ENCODE measurements at regions of chr20 and their contacts with region 1.

Region 1: GRCh38 chr20:5100684-5101347 is 18.9 kb downstream of the PCNA start:
- DNase-seq: peak; percentile 77
- H3K4me3 Mint-ChIP-seq: no peak overlapping the region
- H3K27ac Mint-ChIP-seq: peak overlapping the region; percentile 49
- H3K4me1 Mint-ChIP-seq: no peaks in the 10 kb centered on the region
- H3K27me3 Mint-ChIP-seq: no peaks in the 10 kb centered on the region
- CTCF ChIP-seq: peak; percentile 77

Region 2: DNA sequence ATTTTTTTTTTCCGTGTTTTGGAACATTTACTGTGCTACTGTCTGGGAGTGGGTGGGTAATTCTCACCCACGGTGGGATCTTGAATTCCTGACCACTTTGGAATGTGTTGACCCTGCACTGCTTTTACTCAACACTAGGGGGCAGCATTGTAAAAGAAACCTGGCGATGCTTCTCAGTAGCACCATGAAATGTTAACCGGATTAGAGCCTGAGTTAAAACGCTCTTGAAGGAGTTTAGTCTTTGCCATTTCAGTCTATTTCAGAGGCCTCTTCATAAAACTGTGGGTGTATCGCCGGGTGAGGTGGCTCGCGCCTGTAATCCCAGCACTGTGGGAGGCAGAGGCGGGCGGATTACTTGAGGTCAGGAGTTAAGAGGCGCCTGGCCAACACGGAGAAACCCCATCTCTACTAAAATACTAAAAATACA is 493.5 kb before region 1 on chr20:
- CTCF ChIA-PET with region 1: interaction called, 10 read pairs
- POLR2A ChIA-PET with region 1: no interaction called
- intact Hi-C with region 1: loop called (anchors 2 kb)
- DNase-seq: peak; percentile 71
- H3K4me3 Mint-ChIP-seq: no peak overlapping the region
- H3K27ac Mint-ChIP-seq: no peak overlapping the region
- H3K4me1 Mint-ChIP-seq: peaks cover 2% of the 10 kb centered on the region
- H3K27me3 Mint-ChIP-seq: no peaks in the 10 kb centered on the region
- CTCF ChIP-seq: peak; percentile 78

Region 3: DNA sequence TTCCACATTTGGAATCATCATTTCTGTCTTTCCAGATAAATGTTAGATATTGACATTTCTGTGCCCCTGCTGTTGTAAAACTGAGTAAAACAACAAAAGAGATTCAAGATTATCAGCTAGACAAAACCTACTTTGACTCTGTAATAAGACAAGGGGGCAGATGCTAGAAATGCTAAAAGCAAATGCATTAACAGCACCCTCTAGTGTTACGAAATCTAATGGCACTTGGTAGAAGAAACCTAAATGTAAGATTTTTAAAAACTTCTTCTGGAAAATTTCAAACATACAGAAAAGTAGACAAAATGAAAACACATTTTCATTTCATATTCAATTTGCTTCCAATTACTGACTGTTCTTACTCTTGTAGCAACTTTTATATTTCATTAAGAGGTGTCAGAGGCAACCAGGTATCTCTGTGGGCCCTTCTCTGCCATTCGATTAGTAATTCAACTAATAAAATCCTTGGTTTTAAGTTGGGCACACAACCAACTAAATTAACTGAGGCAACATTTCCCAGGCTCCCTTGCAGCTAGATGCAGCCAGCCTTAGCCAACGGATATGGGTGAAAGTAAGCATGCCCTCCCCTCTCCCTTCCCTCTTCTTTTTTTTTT is 144.5 kb before region 1 on chr20:
- CTCF ChIA-PET with region 1: interaction called, 132 read pairs
- POLR2A ChIA-PET with region 1: interaction called, 3 read pairs
- intact Hi-C with region 1: loop called (anchors 1 kb)
- DNase-seq: peak; percentile 62
- H3K4me3 Mint-ChIP-seq: no peak overlapping the region
- H3K27ac Mint-ChIP-seq: no peak overlapping the region
- H3K4me1 Mint-ChIP-seq: peaks cover 2% of the 10 kb centered on the region
- H3K27me3 Mint-ChIP-seq: no peaks in the 10 kb centered on the region
- CTCF ChIP-seq: peak; percentile 71

Region 4: DNA sequence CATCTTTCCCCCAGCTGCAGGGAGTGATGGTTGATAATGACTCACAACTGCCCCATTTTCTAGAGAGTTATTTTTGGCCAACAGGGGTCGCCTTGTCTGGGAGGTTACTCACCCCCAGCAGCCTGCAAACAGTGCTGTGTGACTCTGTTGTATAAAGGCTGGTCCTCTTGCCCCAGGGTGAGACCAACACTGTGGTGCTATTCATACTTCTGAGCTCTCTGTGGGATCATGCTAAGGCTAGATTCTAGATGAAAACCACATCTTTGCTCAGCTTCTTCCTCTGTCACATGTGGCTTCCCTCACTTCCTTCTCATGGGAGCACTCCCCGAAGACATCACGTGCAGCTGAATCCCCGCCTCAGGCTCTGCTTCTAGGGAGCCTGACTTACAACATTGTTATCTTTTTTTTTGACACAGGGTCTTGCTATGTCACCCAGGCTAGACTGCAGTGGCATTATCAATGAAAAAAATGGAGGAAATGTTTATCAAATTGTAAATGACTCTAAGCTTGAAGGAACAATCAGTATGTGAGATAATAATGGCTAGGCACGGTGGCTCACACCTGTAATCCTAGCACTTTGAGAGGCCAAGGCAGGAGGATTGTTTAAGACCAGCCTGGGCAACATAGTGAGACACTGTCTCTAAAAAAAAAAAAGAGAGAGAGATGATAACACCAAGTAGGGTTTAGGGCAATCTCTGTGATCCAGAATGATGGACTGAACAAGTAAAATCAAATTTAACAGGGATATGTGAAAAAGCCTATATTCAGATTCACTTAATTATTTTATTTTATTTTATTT is 43.8 kb before region 1 on chr20:
- CTCF ChIA-PET with region 1: interaction called, 8 read pairs
- POLR2A ChIA-PET with region 1: no interaction called
- intact Hi-C with region 1: loop called (anchors 1 kb)
- DNase-seq: peak; percentile 65
- H3K4me3 Mint-ChIP-seq: no peak overlapping the region
- H3K27ac Mint-ChIP-seq: no peak overlapping the region
- H3K4me1 Mint-ChIP-seq: peaks cover 12% of the 10 kb centered on the region
- H3K27me3 Mint-ChIP-seq: no peaks in the 10 kb centered on the region
- CTCF ChIP-seq: peak; percentile 33

Region 5: DNA sequence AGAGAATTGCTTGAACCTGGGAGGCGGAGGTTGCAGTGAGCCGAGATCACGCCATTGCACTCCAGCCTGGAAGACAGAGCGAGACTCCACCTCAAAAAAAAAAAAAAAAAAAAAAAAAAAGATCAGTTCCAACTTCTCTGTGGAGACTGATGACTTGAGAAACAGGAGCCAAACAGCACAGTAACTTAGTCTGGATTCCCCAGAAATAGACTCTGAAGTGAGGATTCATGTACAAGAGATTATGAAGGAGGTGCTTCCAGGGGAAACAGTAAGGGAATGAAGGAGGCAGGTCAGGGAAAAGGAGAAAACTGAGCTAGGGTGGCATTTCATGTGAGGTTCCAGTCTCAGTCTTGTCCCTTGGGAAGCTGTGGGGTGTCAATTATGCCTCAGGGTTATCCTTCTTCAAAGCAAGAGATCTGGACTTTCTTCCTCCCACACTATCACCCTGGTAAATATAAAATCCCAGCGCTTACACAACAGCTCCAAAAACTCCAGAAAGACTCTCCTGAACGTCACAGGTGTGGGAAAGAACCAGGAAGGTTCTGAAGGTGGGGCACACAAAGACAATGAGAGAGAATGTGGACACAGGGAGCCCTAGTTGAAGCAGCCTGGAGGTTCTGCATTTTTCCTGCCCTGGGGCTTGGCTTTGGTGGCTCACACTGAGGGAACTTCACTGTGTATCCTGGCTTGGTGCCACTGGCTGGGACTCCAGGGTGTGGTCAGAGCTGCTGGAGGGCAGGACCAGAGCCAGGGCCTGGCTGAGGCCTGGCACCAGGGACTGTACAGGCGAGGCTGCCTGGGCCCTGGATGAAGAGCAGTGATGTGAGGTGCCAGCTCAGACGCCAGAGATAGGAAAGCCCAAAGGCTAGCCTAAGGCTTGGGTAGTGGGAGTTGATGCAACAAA is 27.8 kb before region 1 on chr20:
- CTCF ChIA-PET with region 1: interaction called, 11 read pairs
- POLR2A ChIA-PET with region 1: interaction called, 20 read pairs
- intact Hi-C with region 1: no loop called
- DNase-seq: peak; percentile 99
- H3K4me3 Mint-ChIP-seq: peak overlapping the region; percentile 47
- H3K27ac Mint-ChIP-seq: peak overlapping the region; percentile 90
- H3K4me1 Mint-ChIP-seq: peaks cover 27% of the 10 kb centered on the region
- H3K27me3 Mint-ChIP-seq: no peaks in the 10 kb centered on the region
- CTCF ChIP-seq: no peak

Region 6: GRCh38 chr20:5191829-5192569 is 91.2 kb after region 1 on chr20:
- CTCF ChIA-PET with region 1: interaction called, 16 read pairs
- POLR2A ChIA-PET with region 1: no interaction called
- intact Hi-C with region 1: no loop called
- DNase-seq: peak; percentile 81
- H3K4me3 Mint-ChIP-seq: no peak overlapping the region
- H3K27ac Mint-ChIP-seq: no peak overlapping the region
- H3K4me1 Mint-ChIP-seq: no peaks in the 10 kb centered on the region
- H3K27me3 Mint-ChIP-seq: no peaks in the 10 kb centered on the region
- CTCF ChIP-seq: peak; percentile 81

Region 7: DNA sequence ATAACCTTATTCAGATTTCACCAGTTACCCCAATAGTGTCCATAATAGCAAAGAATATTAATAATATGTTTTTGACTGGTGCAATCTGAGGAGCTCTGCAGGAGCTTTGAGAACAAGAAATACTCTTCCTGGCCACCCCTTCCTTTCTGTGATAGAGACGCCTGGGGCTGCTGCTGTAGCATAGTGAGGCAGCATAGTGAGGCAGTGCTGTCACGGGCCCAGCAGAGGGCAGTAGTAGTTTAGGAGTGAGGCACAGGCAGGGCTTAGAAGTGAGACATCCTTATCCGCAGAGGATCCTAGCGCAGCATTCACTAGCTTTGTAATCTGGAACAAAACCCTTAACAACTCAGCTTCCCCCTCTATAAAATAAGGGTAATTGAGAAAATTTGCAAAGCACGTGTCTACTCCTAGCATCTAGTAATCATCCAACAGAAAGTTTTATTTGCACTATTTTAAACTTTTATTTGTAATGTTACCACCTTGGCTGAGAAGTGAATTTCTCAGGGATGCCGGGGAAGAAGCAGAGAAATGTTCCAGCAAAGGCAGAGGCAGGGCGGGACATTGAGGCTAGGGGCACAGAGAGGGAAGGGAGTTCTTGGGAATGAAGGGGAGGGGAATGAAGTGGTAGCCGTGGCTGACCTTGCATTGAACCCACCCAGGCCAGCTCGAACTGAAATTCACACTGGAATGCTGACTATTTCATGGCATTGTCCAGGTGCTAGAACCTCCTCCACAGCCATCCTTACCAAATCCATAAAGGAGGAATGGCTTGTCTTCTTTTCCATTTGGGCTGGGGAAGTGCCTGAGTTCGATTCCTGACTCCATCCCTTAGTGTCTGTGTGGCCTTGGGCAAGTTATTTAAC is 104.8 kb after region 1 on chr20:
- CTCF ChIA-PET with region 1: no interaction called
- POLR2A ChIA-PET with region 1: no interaction called
- intact Hi-C with region 1: no loop called
- DNase-seq: peak; percentile 70
- H3K4me3 Mint-ChIP-seq: no peak overlapping the region
- H3K27ac Mint-ChIP-seq: no peak overlapping the region
- H3K4me1 Mint-ChIP-seq: no peaks in the 10 kb centered on the region
- H3K27me3 Mint-ChIP-seq: no peaks in the 10 kb centered on the region
- CTCF ChIP-seq: peak; percentile 88